Activated naive CD4-positive, alpha-beta T cell treated with anti-CD3 and anti-CD28 coated beads for 36 hours (primary cell): ENCODE measurements at regions of chr20 and their contacts with region 1.

Region 1: DNA sequence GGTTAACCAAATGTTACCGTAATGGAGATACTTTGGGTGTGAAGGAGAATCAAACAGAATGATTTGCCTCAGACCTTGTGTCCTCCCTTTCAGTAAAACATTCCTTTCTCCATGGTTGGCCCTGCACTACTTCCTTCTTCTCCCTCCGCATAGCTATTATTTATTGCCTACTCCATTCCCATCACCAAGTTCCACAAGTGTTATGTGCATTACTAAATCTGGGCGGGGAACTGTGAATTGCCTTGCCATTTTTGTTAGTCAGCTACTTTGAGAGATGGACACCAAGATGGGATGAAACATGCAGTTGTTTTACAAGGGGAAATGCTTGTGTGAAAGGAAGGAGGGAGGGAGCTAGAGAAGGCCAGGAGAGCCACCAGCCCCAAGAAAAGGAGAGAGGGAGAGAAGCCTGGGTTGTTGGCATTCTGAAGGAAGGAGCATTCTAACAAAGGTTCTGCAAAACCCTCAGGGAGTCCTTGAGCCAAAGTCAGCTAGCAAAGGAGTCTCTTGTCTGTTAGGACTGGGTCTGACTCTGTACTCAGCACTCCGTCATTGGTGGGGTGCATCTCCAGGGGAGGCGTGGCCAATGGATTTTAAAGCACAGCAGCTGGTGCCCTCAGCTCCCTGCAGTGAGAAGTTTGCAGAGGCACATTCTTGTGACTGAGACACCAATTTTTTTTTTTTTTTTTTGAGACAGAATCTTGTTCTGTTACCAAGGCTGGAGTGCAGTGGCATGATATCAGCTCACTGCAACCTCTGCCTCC is 83.6 kb upstream of the CHD6 start:
- DNase-seq: no peak
- H3K4me3 Mint-ChIP-seq: no peak overlapping the region
- H3K27ac Mint-ChIP-seq: no peak overlapping the region
- H3K4me1 Mint-ChIP-seq: peaks cover 2% of the 10 kb centered on the region
- H3K27me3 Mint-ChIP-seq: peaks cover 2% of the 10 kb centered on the region

Region 2: DNA sequence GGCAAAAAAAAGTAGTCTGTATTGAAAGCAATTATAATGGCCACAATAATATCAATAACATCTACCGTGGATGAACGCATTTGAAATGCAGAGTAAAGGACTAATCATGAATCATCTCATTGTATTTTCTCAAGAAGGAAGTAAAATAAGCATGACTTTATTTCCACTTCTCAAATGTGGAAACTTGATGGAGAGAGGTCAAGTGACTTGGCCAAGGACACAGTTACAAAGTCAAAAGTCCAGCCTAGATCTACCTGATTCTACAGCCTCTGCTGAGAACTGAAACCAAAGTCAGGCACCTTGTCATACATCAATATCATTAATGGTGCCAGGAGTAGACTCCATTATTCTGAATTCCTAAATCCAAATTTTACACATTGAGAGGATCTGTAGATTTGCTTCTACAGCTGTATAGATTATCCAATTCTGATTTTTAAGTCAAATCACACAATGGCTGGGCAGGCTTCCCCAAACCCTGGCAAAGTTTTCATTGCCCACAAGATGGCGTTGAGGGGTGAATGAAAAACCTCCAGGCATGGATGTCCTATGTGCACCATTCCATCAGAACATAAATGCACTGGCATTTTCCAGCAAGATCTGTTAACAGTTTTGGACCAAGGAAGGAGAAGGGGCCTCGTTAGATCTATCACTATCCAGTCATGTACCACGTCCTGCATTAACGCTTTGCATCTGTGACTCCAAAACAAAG is 1435.8 kb before region 1 on chr20:
- CTCF ChIA-PET with region 1: no interaction called
- intact Hi-C with region 1: loop called (anchors 5 kb)
- DNase-seq: no peak
- H3K4me3 Mint-ChIP-seq: no peak overlapping the region
- H3K27ac Mint-ChIP-seq: no peak overlapping the region
- H3K4me1 Mint-ChIP-seq: no peaks in the 10 kb centered on the region
- H3K27me3 Mint-ChIP-seq: peaks cover 2% of the 10 kb centered on the region